Activated CD8-positive, alpha-beta memory T cell treated with anti-CD3 and anti-CD28 coated beads, Interleukin-2, amount 10 ng/mL, durations not matched to agents 7 days and 5 days (primary cell): ENCODE measurements at regions of chr19 and their contacts with region 1.

Region 1: DNA sequence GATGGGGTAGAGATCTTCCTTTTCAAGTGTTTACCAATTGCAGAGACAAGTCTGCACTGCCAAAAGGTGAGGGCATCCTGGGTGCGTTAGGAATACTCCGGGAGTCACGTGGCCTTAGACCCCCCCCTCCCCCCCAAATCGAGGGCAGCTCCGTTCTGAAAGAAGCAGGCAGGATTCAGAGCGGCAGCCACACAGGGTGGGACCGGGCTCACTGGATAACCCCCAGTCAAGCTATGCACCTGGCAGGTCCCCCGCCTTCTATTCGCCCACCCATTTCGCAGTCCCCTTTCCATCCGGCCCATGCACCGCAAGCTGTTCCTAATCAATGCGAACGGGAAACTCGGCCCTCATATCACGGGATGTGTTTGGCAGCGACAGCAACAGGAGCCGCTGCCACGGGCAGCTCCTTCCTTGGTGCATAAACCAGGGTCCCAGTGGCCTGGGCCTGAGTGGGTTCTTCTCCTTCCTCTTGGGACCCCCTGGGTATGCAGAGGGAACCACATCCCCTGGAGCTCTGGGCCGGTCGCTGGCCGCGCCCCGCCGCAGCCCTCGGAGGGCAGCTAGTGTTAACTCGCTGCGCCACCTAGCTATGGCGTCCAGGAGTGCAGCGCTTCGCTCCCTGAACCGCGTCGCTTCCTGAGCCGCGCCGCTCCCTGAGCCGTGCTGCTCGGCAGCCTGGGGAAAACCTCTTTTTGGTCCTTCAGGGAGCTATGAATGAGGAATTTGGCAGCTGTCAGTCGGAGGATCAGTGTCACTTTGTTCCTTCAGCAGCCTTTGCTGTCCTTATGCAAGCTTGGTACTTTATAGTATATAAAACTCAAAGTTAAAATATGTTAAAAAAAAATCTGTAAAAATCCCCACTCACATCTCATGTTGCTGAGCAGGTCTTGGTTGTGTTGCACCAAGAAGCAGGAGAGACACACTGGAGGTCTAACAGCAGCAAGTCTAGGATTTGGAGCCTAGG is 41.4 kb downstream of the LYL1 start:
- DNase-seq: peak; percentile 83
- ATAC-seq: peak; percentile 96
- H3K4me3 Mint-ChIP-seq: peak overlapping the region; percentile 58
- H3K27ac Mint-ChIP-seq: no peak overlapping the region
- H3K4me1 Mint-ChIP-seq: peaks cover 8% of the 10 kb centered on the region
- H3K27me3 Mint-ChIP-seq: peaks cover 32% of the 10 kb centered on the region

Region 2: DNA sequence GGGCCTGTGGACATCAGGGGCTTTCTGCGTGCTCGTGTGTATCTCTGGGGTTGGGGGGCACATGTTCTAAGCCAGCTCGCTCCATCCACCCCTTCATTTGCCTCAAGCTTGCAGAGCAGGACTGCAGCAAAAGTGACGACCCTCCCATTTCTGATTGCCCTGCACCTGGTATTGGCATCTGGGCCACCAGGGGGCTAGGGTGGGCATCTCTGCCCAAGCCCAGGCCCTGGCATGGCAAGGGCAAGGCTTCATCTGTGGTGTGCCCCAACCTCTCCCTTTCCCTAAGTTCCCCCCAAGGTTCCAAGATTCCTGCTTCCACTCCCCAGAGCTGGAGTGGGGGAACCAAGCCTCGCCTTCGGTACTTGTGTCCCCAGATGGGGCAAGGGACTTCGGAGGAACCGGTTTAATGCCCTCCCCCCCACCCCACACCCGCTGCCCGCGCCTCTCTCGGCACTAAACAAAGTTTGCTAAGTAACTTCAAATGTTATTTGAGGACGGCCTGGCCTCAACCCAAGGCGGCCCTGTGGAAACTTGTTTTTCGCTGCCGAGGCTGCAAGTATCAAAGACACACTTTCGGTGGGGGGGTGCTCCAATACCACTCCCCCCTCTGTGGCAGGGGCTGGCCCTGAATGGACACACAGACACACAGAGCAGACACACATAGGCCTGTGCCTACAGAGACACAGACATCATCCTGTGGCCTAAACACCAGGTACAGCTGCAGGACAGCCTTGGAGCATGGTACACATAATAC is 53.8 kb before region 1 on chr19:
- CTCF ChIA-PET with region 1: interaction called, 17 read pairs
- DNase-seq: no peak
- ATAC-seq: no peak
- H3K4me3 Mint-ChIP-seq: no peak overlapping the region
- H3K27ac Mint-ChIP-seq: no peak overlapping the region
- H3K4me1 Mint-ChIP-seq: peaks cover under 1% of the 10 kb centered on the region
- H3K27me3 Mint-ChIP-seq: peaks cover 36% of the 10 kb centered on the region

Region 3: GRCh38 chr19:13033819-13034611 is 27.2 kb before region 1 on chr19:
- CTCF ChIA-PET with region 1: interaction called, 23 read pairs
- DNase-seq: peak; percentile 63
- ATAC-seq: peak; percentile 73
- H3K4me3 Mint-ChIP-seq: no peak overlapping the region
- H3K27ac Mint-ChIP-seq: no peak overlapping the region
- H3K4me1 Mint-ChIP-seq: peaks cover 16% of the 10 kb centered on the region
- H3K27me3 Mint-ChIP-seq: peaks cover 11% of the 10 kb centered on the region

Region 4: DNA sequence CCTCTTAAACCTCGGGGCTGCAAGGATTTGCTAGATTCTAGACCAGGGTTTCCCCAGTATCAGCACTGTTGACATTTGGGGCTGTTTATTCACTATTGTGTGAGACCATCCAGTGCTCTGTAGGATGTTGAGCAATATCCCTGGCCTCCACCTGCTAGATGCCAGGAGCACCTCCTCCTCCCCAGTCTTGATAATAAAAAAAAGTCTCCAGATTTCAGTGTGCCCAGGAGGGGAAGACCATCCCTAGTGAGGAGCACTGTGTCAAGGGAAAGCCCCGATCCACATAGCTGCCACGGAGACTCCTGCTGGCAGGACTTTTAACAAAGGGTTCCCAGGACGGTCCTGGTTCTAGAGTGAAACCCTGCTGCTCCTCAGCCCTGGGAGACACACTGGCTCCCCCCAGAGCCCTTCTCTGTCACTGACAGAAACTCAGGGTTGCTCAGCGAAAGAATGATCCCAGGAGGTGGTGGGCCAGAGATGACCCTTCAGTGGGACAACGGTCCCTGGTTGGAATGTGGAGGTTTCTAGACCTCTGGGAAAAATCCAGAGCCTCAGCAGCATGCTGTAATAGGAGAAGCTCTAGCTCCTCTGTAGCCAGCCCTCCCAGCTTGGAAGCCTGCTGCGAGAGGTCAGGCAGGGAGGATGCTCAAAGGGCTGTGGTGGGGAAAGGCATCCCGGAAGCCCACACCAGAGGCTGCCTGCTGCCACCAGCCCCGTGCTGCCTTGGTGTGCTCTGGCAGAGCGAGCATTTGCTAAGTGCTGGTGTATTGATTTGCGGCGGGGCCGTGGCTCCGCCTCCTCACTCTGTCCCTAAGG is 21.2 kb after region 1 on chr19:
- CTCF ChIA-PET with region 1: interaction called, 20 read pairs
- DNase-seq: no peak
- ATAC-seq: no peak
- H3K4me3 Mint-ChIP-seq: no peak overlapping the region
- H3K27ac Mint-ChIP-seq: no peak overlapping the region
- H3K4me1 Mint-ChIP-seq: no peaks in the 10 kb centered on the region
- H3K27me3 Mint-ChIP-seq: peaks cover 2% of the 10 kb centered on the region